ENCODE measurements at regions of chr14 and their contacts with region 1.

Region 1: DNA sequence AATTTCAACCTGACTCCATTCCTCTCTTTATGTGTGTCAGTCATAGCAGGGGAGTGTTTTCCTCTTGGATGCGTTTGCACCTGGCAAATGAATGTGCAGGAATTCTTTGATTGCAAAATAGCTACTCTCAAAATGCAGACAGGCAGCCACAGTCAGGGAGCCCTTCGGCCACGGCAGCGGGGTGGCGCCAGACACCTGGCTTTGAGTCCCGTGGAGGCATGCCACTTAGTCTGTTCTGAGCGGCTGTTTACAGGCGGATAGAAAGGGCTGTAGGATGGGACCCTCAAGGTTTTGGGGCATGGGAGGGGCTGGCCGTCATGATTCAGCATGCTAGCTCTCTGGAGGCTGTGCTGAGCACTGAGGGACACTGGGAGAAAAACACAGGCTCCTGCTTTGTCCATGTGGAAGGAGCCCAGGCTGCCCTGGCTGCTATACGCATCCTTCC is 117.1 kb downstream of the SLC25A47 start:
- DNase-seq: peak; percentile 33 to 66
- ATAC-seq: peak; percentile 82 to 94 (median 89)
- H3K4me3 ChIP-seq: no peak overlapping the region
- H3K27ac ChIP-seq: peak overlapping the region in 7 of 10 donors; percentile 32 to 69 (median 57)
- H3K4me1 ChIP-seq: peaks cover 6 to 34% (median 24%) of the 10 kb centered on the region in 9 donors
- H3K27me3 ChIP-seq: no peaks in the 10 kb centered on the region
- CTCF ChIP-seq: peak; percentile 49 to 83 (median 62)

Region 2: DNA sequence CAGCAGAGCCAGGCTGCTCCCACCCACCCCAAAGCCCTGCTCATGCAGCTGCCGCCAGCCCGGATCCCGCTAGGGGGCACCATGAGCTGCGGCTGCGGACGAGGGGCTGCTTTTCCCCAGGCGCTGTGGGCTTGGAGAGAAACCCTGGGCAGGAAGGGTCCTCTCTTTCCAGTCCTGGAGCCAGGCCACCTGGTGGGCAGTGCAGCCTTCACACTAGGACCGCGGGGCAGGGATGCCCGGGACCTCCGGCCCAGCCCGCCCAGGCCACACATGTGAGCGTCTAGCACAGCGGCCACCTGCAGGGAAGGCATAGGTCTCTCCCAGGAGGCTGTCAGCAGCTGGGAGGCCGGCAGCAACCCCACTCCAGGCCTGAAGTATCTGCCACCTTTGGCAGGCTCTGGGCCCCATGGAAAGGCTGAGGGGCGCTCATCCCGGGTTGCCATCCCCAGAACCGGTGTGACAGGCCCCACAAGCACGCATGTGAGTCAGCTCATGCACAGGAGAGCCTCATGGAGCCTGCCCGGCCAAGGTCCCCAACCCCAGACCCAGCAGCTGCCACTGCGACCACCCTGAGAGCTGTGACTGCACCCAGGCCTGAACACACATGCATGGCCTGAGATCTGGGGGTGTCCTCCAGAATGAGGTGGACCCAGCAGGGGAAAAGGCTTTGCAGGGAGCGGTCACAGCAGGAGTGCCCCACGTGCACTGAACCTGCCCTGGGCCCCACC is 743.3 kb after region 1 on chr14:
- intact Hi-C with region 1: loop called in 1 of 10 experiments (anchors 5 kb)
- DNase-seq: no peak
- ATAC-seq: no peak
- H3K4me3 ChIP-seq: no peak overlapping the region
- H3K27ac ChIP-seq: no peak overlapping the region
- H3K4me1 ChIP-seq: no peaks in the 10 kb centered on the region
- H3K27me3 ChIP-seq: peaks cover 0 to 40% (median 22%) of the 10 kb centered on the region in 7 donors
- CTCF ChIP-seq: peak in 3 of 9 donors; percentile 15 to 19 (median 18)